ENCODE measurements at regions of chr13 and their contacts with region 1.

Region 1: GRCh38 chr13:78137404-78138142 is 218.9 kb upstream of the EDNRB start:
- DNase-seq: peak; percentile 33
- ATAC-seq: peak; percentile 92
- H3K4me3 ChIP-seq: no peak overlapping the region
- H3K27ac ChIP-seq: no peak overlapping the region
- H3K4me1 ChIP-seq: no peaks in the 10 kb centered on the region
- H3K27me3 ChIP-seq: no peaks in the 10 kb centered on the region
- CTCF ChIP-seq: peak; percentile 35 to 62 (median 54); a peak in 4 of 6 replicates
- POLR2A ChIP-seq: no peak
- RAD21 ChIP-seq: peak; percentile 63

Region 2: GRCh38 chr13:77565635-77566034 is 571.9 kb before region 1 on chr13:
- CTCF ChIA-PET with region 1: no interaction called
- POLR2A ChIA-PET with region 1: no interaction called
- RAD21 ChIA-PET with region 1: no interaction called
- intact Hi-C with region 1: no loop called
- DNase-seq: peak; percentile 12
- ATAC-seq: peak; percentile 74; the same call in 1 of the 2 replicates
- H3K4me3 ChIP-seq: no peak overlapping the region
- H3K27ac ChIP-seq: no peak overlapping the region
- H3K4me1 ChIP-seq: no peaks in the 10 kb centered on the region
- H3K27me3 ChIP-seq: no peaks in the 10 kb centered on the region
- CTCF ChIP-seq: peak; percentile 29 to 63 (median 32); a peak in 3 of 6 replicates
- POLR2A ChIP-seq: no peak
- RAD21 ChIP-seq: peak; percentile 64

Region 3: GRCh38 chr13:78700121-78700910 is 562.7 kb after region 1 on chr13:
- CTCF ChIA-PET with region 1: no interaction called
- POLR2A ChIA-PET with region 1: no interaction called
- RAD21 ChIA-PET with region 1: no interaction called
- intact Hi-C with region 1: loop called (anchors 10 kb)
- DNase-seq: no peak
- ATAC-seq: no peak
- H3K4me3 ChIP-seq: no peak overlapping the region
- H3K27ac ChIP-seq: no peak overlapping the region
- H3K4me1 ChIP-seq: no peaks in the 10 kb centered on the region
- H3K27me3 ChIP-seq: peaks cover 10% of the 10 kb centered on the region; the same call in 1 of the 2 replicates
- CTCF ChIP-seq: no peak
- POLR2A ChIP-seq: no peak
- RAD21 ChIP-seq: no peak

Region 4: GRCh38 chr13:78978381-78978998 is 840.9 kb after region 1 on chr13:
- CTCF ChIA-PET with region 1: interaction called, 22 read pairs
- POLR2A ChIA-PET with region 1: no interaction called
- RAD21 ChIA-PET with region 1: interaction called, 6 read pairs
- intact Hi-C with region 1: loop called (anchors 2 kb)
- DNase-seq: peak; percentile 48
- ATAC-seq: peak; percentile 84
- H3K4me3 ChIP-seq: no peak overlapping the region
- H3K27ac ChIP-seq: no peak overlapping the region
- H3K4me1 ChIP-seq: no peaks in the 10 kb centered on the region
- H3K27me3 ChIP-seq: peaks cover 4% of the 10 kb centered on the region
- CTCF ChIP-seq: peak; percentile 34 to 65 (median 52); a peak in 5 of 6 replicates
- POLR2A ChIP-seq: no peak
- RAD21 ChIP-seq: peak; percentile 56

Region 5: GRCh38 chr13:79056706-79057105 is 919.1 kb after region 1 on chr13:
- CTCF ChIA-PET with region 1: interaction called, 3 read pairs
- POLR2A ChIA-PET with region 1: no interaction called
- RAD21 ChIA-PET with region 1: no interaction called
- intact Hi-C with region 1: loop called (anchors 2 kb)
- DNase-seq: no peak
- ATAC-seq: no peak
- H3K4me3 ChIP-seq: no peak overlapping the region
- H3K27ac ChIP-seq: no peak overlapping the region
- H3K4me1 ChIP-seq: no peaks in the 10 kb centered on the region
- H3K27me3 ChIP-seq: peaks cover 6% of the 10 kb centered on the region; the same call in 1 of the 2 replicates
- CTCF ChIP-seq: peak; percentile 6 to 52 (median 51); a peak in 4 of 6 replicates
- POLR2A ChIP-seq: no peak
- RAD21 ChIP-seq: peak; percentile 34; the same call in 1 of the 2 replicates

Region 6: GRCh38 chr13:79246578-79246949 is 1109.0 kb after region 1 on chr13:
- CTCF ChIA-PET with region 1: no interaction called
- POLR2A ChIA-PET with region 1: no interaction called
- RAD21 ChIA-PET with region 1: no interaction called
- intact Hi-C with region 1: loop called (anchors 5 kb)
- DNase-seq: no peak
- ATAC-seq: no peak
- H3K4me3 ChIP-seq: no peak overlapping the region
- H3K27ac ChIP-seq: no peak overlapping the region
- H3K4me1 ChIP-seq: no peaks in the 10 kb centered on the region
- H3K27me3 ChIP-seq: peaks cover 8% of the 10 kb centered on the region
- CTCF ChIP-seq: peak in 1 of 3 experiments; percentile 16; a peak in 1 of 6 replicates
- POLR2A ChIP-seq: no peak
- RAD21 ChIP-seq: peak; percentile 26; the same call in 1 of the 2 replicates

Measured in HCT116 (cell line).